GM18951 (cell line): ENCODE measurements at regions of chr13 and their contacts with region 1.

Region 1: DNA sequence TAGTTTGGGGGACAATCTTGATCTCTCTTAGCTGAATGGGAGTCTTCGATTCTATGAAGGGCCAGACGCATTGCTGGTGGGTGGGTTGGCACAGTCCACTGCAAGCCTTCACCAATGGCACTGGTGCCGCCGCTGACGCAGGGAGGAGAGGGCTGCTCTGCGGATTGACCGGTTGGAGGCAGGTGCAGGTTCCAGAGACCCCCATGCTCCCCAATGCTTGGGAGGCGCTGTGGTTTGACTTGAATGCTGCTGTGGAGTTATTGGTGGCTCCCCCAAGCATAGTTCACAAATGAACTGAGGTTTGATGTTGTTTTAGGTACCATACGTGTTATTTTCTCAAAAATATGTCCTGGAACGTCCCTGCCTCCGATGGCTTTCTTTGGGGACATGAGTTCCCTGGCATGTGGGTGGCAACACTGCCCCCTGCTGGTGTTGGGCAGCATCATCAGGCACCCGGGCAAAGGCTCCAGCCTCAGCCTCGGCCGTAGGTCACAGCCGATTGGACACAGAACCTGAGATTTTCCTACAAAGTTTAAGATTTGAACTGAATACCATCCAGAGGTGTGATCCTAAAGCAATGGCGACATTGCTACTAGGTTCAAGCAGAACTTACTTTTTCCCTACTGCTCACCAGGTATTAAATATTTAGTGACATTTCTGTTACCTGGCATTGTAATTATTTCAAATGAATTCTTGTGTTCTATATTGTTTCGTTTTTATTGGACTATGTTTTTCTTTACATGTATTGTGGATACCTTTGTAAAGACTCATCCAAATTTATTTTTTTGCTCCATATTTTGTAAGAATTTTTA is 95.5 kb downstream of the ANKRD10 start:
- POLR2A ChIP-seq: no peak

Region 2: DNA sequence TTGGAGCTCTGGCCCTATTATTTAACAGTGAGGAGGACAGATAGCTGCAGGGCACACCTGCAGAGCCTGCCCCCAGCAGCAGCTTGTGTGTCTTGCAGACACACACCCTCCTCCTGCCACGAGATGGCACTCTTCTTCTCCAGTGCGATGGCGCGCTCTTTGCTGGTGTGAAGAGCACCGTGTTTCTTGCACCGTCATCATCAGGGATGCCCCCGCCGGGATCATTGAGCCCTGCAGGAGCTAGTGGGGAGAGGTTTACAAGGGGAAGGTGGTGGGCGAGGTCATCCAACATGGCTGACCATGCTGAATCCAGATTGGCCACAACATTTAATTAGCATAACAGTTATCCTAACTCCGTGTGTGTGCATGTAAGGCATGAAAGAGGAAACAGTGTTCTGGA is 363.5 kb before region 1 on chr13:
- in situ Hi-C with region 1: loop called (anchors 25 kb)
- POLR2A ChIP-seq: no peak

Region 3: GRCh38 chr13:110593430-110594130 is 225.8 kb before region 1 on chr13:
- in situ Hi-C with region 1: loop called (anchors 10 kb)
- POLR2A ChIP-seq: no peak

Region 4: GRCh38 chr13:111241006-111241755 is 421.8 kb after region 1 on chr13:
- in situ Hi-C with region 1: no loop called
- POLR2A ChIP-seq: no peak

Region 5: DNA sequence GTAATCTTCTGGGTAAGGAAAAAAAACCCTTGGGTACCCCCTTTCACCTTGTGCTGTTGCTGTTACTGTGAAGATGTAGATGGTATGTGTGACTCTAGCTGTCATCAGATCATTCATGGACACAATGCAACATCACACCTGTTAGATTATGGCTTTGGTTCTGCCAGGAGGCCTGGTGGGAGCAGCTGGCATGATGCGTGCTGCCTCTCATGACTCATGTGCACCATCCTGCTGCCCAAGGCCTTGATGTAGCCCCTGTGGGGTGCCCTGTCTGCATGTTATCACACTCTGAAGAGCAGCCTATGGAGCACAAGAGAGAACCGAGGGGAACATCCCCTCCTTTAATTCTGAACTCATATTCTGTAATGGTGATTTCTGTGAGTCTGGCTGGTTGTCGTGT is 443.3 kb after region 1 on chr13:
- in situ Hi-C with region 1: no loop called
- POLR2A ChIP-seq: no peak